ENCODE measurements at regions of chr9 and their contacts with region 1.

Region 1: DNA sequence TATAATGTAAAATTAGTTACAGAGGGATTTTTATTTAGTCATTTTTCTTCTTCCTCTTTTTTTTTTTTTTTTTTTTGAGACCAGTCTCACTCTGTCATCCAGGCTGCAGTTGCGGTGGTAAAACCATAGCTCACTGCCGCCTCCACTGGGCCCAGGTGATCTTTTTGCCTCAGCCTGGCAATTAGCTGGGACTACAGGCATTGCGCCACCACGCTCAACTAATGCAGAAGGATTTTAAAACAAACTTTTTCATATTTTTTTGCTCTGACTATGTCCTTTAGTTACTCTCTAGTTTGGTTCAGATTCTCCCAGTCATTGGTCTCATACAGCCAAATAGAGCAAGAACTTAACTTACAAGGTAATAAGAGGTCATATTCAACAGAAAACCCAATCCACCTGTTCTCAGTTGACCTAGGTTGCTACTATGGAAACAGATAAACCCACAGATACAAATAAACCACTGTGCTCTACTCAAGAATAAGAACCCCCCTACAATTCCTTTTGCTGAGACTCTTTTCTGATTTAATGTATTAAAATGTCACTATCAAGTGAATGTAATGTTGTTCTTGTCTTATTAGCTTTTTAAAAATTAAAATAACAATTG is 50.1 kb upstream of the TTC39B start:
- DNase-seq: peak in 1 of 2 donors; percentile 72
- ATAC-seq: peak; percentile 59 to 64 (median 63)
- H3K4me3 ChIP-seq: no peak overlapping the region
- H3K4me3 Mint-ChIP-seq: no peak overlapping the region
- H3K27ac ChIP-seq: no peak overlapping the region
- H3K27ac Mint-ChIP-seq: no peak overlapping the region
- H3K4me1 ChIP-seq: no peaks in the 10 kb centered on the region
- H3K4me1 Mint-ChIP-seq: peaks cover 5 to 11% of the 10 kb centered on the region in 2 donors
- H3K27me3 ChIP-seq: no peaks in the 10 kb centered on the region
- H3K27me3 Mint-ChIP-seq: no peaks in the 10 kb centered on the region
- CTCF ChIP-seq: no peak

Region 2: GRCh38 chr9:14967450-14968321 is 389.5 kb before region 1 on chr9:
- intact Hi-C with region 1: no loop called
- DNase-seq: no peak
- ATAC-seq: no peak
- H3K4me3 ChIP-seq: no peak overlapping the region
- H3K4me3 Mint-ChIP-seq: no peak overlapping the region
- H3K27ac ChIP-seq: no peak overlapping the region
- H3K27ac Mint-ChIP-seq: no peak overlapping the region
- H3K4me1 ChIP-seq: no peaks in the 10 kb centered on the region
- H3K4me1 Mint-ChIP-seq: no peaks in the 10 kb centered on the region
- H3K27me3 ChIP-seq: no peaks in the 10 kb centered on the region
- H3K27me3 Mint-ChIP-seq: no peaks in the 10 kb centered on the region
- CTCF ChIP-seq: no peak

Region 3: DNA sequence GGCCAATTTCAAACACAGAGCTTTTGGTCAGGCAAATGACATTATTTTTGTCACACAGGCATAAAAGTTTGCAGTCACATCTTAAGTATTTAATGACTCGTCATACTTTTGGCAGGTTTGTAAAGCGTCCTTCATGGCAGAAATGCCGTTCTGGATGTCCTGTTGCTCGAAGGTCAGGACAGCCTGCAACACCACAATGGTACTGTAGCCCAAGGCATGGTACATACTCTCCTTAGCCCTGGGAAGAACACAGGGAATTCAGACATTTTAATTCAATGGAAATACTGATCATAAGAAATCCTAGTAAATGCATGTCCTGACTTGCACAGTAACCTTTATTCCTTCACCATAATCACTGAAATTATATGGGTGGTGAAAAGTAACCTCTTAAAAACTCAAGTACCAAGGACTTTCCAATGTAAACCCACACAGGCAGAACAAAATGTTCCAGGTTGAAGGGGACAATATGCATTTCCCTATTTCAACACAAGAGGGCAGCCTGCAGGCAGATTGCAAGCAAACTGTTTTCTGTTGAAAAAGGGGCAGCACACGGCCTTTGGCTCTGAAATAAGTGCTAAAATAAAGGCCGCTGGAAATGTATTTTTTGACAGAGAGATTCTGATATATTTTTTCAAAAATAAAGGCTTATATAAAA is 145.9 kb before region 1 on chr9:
- intact Hi-C with region 1: loop called (anchors 5 kb)
- DNase-seq: peak; percentile 23 to 80
- ATAC-seq: peak in 2 of 3 donors; percentile 64 to 68
- H3K4me3 ChIP-seq: no peak overlapping the region
- H3K4me3 Mint-ChIP-seq: no peak overlapping the region
- H3K27ac ChIP-seq: no peak overlapping the region
- H3K27ac Mint-ChIP-seq: no peak overlapping the region
- H3K4me1 ChIP-seq: no peaks in the 10 kb centered on the region
- H3K4me1 Mint-ChIP-seq: peaks cover 9 to 22% of the 10 kb centered on the region in 2 donors
- H3K27me3 ChIP-seq: no peaks in the 10 kb centered on the region
- H3K27me3 Mint-ChIP-seq: no peaks in the 10 kb centered on the region
- CTCF ChIP-seq: peak; percentile 91

Region 4: GRCh38 chr9:15529566-15530324 is 172.6 kb after region 1 on chr9:
- intact Hi-C with region 1: no loop called
- DNase-seq: no peak
- ATAC-seq: peak in 1 of 3 donors; percentile 39
- H3K4me3 ChIP-seq: no peak overlapping the region
- H3K4me3 Mint-ChIP-seq: no peak overlapping the region
- H3K27ac ChIP-seq: no peak overlapping the region
- H3K27ac Mint-ChIP-seq: no peak overlapping the region
- H3K4me1 ChIP-seq: no peaks in the 10 kb centered on the region
- H3K4me1 Mint-ChIP-seq: no peaks in the 10 kb centered on the region
- H3K27me3 ChIP-seq: no peaks in the 10 kb centered on the region
- H3K27me3 Mint-ChIP-seq: no peaks in the 10 kb centered on the region
- CTCF ChIP-seq: no peak

Measured in natural killer cell (primary cell).